Heart right ventricle (tissue), 16 donors: ENCODE measurements at regions of chrX and their contacts with region 1.

Region 1: GRCh38 chrX:13432414-13433297 is 112.8 kb upstream of the ATXN3L start:
- DNase-seq: peak in 1 of 2 donors; percentile 62
- ATAC-seq: peak; percentile 64 to 95 (median 91)
- H3K4me3 ChIP-seq: no peak overlapping the region
- H3K27ac ChIP-seq: peak overlapping the region in 9 of 10 donors; percentile 0 to 78 (median 71)
- H3K4me1 ChIP-seq: peaks cover 4 to 21% (median 13%) of the 10 kb centered on the region in 9 donors
- H3K27me3 ChIP-seq: peaks cover 0 to 30% (median 0%) of the 10 kb centered on the region in 7 donors
- CTCF ChIP-seq: no peak

Region 2: DNA sequence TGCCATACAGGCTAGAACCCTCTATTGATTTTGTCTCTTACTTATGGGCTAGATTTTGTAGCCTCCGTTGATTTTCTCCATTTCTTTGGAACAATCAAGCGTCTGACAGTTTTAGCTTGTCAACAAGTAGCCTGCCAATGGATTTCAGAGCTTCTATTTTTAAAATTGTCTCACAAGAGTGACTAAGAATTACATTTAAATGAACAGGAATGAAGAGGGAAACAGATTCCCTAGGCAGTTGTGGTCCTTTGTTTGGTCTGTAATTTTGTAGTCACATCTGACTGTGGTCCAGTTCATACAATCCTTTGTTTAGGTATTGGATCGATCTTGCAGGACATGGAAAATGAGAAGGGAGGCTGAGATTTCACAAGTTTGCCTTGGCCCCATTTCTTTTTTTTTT is 50.1 kb after region 1 on chrX:
- intact Hi-C with region 1: loop called in 1 of 10 experiments (anchors 5 kb)
- DNase-seq: no peak
- ATAC-seq: no peak
- H3K4me3 ChIP-seq: no peak overlapping the region
- H3K27ac ChIP-seq: peak overlapping the region in 5 of 10 donors; percentile 44 to 67 (median 56)
- H3K4me1 ChIP-seq: peaks cover 0 to 18% (median 6%) of the 10 kb centered on the region in 9 donors
- H3K27me3 ChIP-seq: peaks cover 0 to 61% (median 0%) of the 10 kb centered on the region in 7 donors
- CTCF ChIP-seq: no peak

Region 3: DNA sequence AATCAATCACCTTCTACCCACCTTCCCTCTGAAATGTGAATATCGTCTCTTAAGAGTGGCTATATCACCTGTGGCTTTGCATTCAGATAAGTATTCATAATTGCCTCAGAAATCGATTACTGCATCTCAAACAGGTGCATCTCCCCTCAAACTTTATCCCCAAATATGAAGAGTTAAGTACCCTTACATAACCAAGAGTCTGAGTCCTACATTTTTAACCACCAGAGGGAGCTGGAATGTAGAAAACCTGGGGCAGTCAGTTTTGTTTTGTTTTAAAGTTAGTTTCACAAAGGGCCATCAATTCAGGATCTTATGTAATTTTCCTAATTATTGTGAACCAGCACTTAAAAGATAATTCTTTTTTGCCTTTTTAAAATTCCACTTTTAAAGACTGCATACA is 225.9 kb after region 1 on chrX:
- intact Hi-C with region 1: no loop called
- DNase-seq: peak in 1 of 2 donors; percentile 11
- ATAC-seq: peak in 2 of 8 donors; percentile 53 to 67
- H3K4me3 ChIP-seq: no peak overlapping the region
- H3K27ac ChIP-seq: peak overlapping the region in 8 of 10 donors; percentile 9 to 69 (median 40)
- H3K4me1 ChIP-seq: peaks cover 0 to 23% (median 8%) of the 10 kb centered on the region in 9 donors
- H3K27me3 ChIP-seq: peaks cover 0 to 4% (median 0%) of the 10 kb centered on the region in 7 donors
- CTCF ChIP-seq: peak; percentile 37 to 71 (median 69)